ENCODE measurements at regions of chr9 and their contacts with region 1.

Region 1: DNA sequence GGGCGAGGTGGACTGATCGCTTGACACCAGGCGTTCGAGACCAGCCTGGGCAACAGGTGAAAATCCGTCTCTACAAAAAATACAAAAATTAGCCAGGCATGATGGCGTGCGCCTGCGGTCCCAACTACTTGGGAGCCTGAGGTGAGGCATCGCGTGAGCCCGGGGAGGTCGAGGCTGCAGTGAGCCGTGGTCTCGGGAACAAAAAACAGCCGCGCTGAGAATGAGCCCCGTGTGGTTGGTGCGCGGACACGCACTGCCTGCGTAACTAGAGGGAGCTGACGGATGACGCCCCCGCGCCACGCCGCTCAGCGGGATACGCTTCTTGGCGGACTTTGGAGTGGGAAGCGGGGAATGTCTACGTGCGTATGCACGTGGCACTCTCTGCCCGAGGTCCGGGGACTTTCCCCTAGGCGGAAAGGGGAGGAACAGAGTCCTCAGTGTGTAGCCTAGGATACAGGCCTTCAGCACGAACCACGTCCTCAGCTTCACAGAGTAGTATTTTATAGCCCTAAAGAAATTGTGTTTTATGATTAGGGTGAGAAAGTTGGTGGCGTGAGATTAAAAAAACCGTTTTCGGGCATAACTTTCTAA is at the start of gene RMRP:
- DNase-seq: peak; percentile 98 to 99
- ATAC-seq: peak; percentile 97
- H3K4me3 ChIP-seq: peak within 1 kb of the TSS; percentile 80 to 90
- H3K27ac ChIP-seq: peak within 1 kb of the TSS; percentile 77 to 86
- H3K4me1 ChIP-seq: no peaks in the 10 kb centered on the region
- H3K27me3 ChIP-seq: no peaks in the 10 kb centered on the region
- total RNA-seq, gene RMRP: 14,949 to 16,694 TPM

Region 2: GRCh38 chr9:35690431-35691333 is 33.0 kb after region 1 on chr9:
- intact Hi-C with region 1: loop called in 1 of 2 experiments (anchors 2 kb)
- DNase-seq: peak; percentile 92 to 98
- ATAC-seq: peak; percentile 79
- H3K4me3 ChIP-seq: peak overlapping the region; percentile 44 to 95
- H3K27ac ChIP-seq: peak overlapping the region; percentile 76 to 100
- H3K4me1 ChIP-seq: no peaks in the 10 kb centered on the region
- H3K27me3 ChIP-seq: no peaks in the 10 kb centered on the region

Region 3: GRCh38 chr9:35732122-35732799 is 74.6 kb after region 1 on chr9 and contains the starts of genes CREB3 and TLN1:
- intact Hi-C with region 1: loop called (anchors 1 to 2 kb)
- DNase-seq: peak; percentile 99 to 100
- ATAC-seq: peak; percentile 94
- H3K4me3 ChIP-seq: peak within 1 kb of the TSS; percentile 65 to 97
- H3K27ac ChIP-seq: peak within 1 kb of the TSS; percentile 94 to 98
- H3K4me1 ChIP-seq: no peaks in the 10 kb centered on the region
- H3K27me3 ChIP-seq: no peaks in the 10 kb centered on the region
- total RNA-seq, gene CREB3: 39.5 to 51.3 TPM
- total RNA-seq, gene TLN1: 735 to 1,271 TPM

Region 4: GRCh38 chr9:35760651-35761050 is 103.0 kb after region 1 on chr9:
- intact Hi-C with region 1: no loop called
- DNase-seq: peak in 1 of 2 donors; percentile 68
- ATAC-seq: no peak
- H3K4me3 ChIP-seq: no peak overlapping the region
- H3K27ac ChIP-seq: peak overlapping the region in 1 of 2 donors; percentile 40
- H3K4me1 ChIP-seq: no peaks in the 10 kb centered on the region
- H3K27me3 ChIP-seq: no peaks in the 10 kb centered on the region

Region 5: DNA sequence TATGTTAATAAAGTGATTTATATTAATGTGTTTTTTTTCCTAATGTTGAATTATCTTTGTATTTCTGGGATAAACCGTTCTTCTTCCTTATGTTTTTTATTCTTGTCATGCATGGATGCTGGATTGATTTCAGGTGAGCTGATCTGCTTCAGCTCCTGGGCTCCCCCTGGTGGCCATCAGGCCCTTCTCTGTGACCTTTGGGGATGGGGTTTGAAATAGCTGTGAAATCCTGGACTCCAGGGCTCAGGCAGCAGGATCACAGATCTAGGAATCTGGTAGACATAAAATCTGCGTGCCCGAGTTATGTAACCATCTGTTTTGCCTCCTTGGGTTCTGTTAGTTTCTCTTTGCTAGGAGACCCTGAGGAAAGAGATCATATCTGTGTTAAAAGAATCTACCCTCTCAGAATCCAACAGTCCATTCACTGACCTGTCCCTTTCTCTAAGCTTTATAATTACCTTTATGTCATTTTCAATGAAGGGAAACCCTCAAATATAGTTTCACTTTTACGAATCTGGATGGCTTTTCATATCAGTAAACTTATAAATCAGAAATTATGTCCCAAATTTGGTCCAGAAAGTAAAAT is 224.7 kb after region 1 on chr9:
- intact Hi-C with region 1: loop called in 1 of 2 experiments (anchors 10 kb)
- DNase-seq: peak; percentile 87 to 95
- ATAC-seq: peak; percentile 88
- H3K4me3 ChIP-seq: no peak overlapping the region
- H3K27ac ChIP-seq: no peak overlapping the region
- H3K4me1 ChIP-seq: no peaks in the 10 kb centered on the region
- H3K27me3 ChIP-seq: no peaks in the 10 kb centered on the region